ENCODE measurements at regions of chr10 and their contacts with region 1.

Region 1: GRCh38 chr10:101012525-101013364 is 13.1 kb downstream of the LZTS2 start:
- DNase-seq: peak; percentile 60 to 86 (median 70)
- ATAC-seq: peak; percentile 88
- H3K4me3 ChIP-seq: no peak overlapping the region
- H3K4me3 Mint-ChIP-seq: no peak overlapping the region
- H3K27ac ChIP-seq: no peak overlapping the region
- H3K27ac Mint-ChIP-seq: no peak overlapping the region
- H3K4me1 ChIP-seq: peaks cover 19% of the 10 kb centered on the region
- H3K4me1 Mint-ChIP-seq: peaks cover 16% of the 10 kb centered on the region
- H3K27me3 ChIP-seq: peaks cover 20 to 21% of the 10 kb centered on the region in 2 experiments
- H3K27me3 Mint-ChIP-seq: peaks cover 40% of the 10 kb centered on the region
- CTCF ChIP-seq: peak; percentile 87

Region 2: GRCh38 chr10:100670828-100671479 is 341.8 kb before region 1 on chr10:
- CTCF ChIA-PET with region 1: no interaction called
- POLR2A ChIA-PET with region 1: no interaction called
- intact Hi-C with region 1: loop called in 1 of 2 experiments (anchors 5 kb)
- DNase-seq: peak; percentile 15 to 72 (median 49)
- ATAC-seq: peak; percentile 66
- H3K4me3 ChIP-seq: no peak overlapping the region
- H3K4me3 Mint-ChIP-seq: no peak overlapping the region
- H3K27ac ChIP-seq: no peak overlapping the region
- H3K27ac Mint-ChIP-seq: no peak overlapping the region
- H3K4me1 ChIP-seq: peaks cover 6% of the 10 kb centered on the region
- H3K4me1 Mint-ChIP-seq: peaks cover 9% of the 10 kb centered on the region
- H3K27me3 ChIP-seq: peaks cover 58 to 75% of the 10 kb centered on the region in 2 experiments
- H3K27me3 Mint-ChIP-seq: peaks cover 84% of the 10 kb centered on the region
- CTCF ChIP-seq: peak; percentile 68

Region 3: GRCh38 chr10:100969187-100970075 is 43.3 kb before region 1 on chr10 and contains the start of gene SEMA4G:
- CTCF ChIA-PET with region 1: no interaction called
- POLR2A ChIA-PET with region 1: no interaction called
- intact Hi-C with region 1: loop called (anchors 1 to 2 kb)
- DNase-seq: peak; percentile 14 to 73 (median 36)
- ATAC-seq: peak; percentile 77
- H3K4me3 ChIP-seq: peak within 1 kb of the TSS; percentile 46
- H3K4me3 Mint-ChIP-seq: peak within 1 kb of the TSS; percentile 76
- H3K27ac ChIP-seq: no peak within 1 kb of the TSS
- H3K27ac Mint-ChIP-seq: no peak within 1 kb of the TSS
- H3K4me1 ChIP-seq: peaks cover 20% of the 10 kb centered on the region
- H3K4me1 Mint-ChIP-seq: peaks cover 21% of the 10 kb centered on the region
- H3K27me3 ChIP-seq: no peaks in the 10 kb centered on the region
- H3K27me3 Mint-ChIP-seq: no peaks in the 10 kb centered on the region
- CTCF ChIP-seq: peak; percentile 67
- total RNA-seq, gene SEMA4G: 1.1 to 1.6 TPM

Region 4: GRCh38 chr10:100993986-100994708 is 18.6 kb before region 1 on chr10:
- CTCF ChIA-PET with region 1: interaction called, 20 read pairs
- POLR2A ChIA-PET with region 1: no interaction called
- intact Hi-C with region 1: loop called (anchors 1 kb)
- DNase-seq: no peak
- ATAC-seq: no peak
- H3K4me3 ChIP-seq: no peak overlapping the region
- H3K4me3 Mint-ChIP-seq: peak overlapping the region; percentile 82
- H3K27ac ChIP-seq: no peak overlapping the region
- H3K27ac Mint-ChIP-seq: peak overlapping the region; percentile 13
- H3K4me1 ChIP-seq: peaks cover 37% of the 10 kb centered on the region
- H3K4me1 Mint-ChIP-seq: peaks cover 27% of the 10 kb centered on the region
- H3K27me3 ChIP-seq: no peaks in the 10 kb centered on the region
- H3K27me3 Mint-ChIP-seq: no peaks in the 10 kb centered on the region
- CTCF ChIP-seq: peak; percentile 50

Region 5: GRCh38 chr10:100998991-100999741 is 13.6 kb before region 1 on chr10:
- CTCF ChIA-PET with region 1: interaction called, 20 read pairs
- POLR2A ChIA-PET with region 1: interaction called, 3 read pairs
- intact Hi-C with region 1: loop called (anchors 1 kb)
- DNase-seq: peak; percentile 61 to 90 (median 74)
- ATAC-seq: peak; percentile 66
- H3K4me3 ChIP-seq: peak overlapping the region; percentile 97
- H3K4me3 Mint-ChIP-seq: peak overlapping the region; percentile 90
- H3K27ac ChIP-seq: peak overlapping the region; percentile 82 to 90
- H3K27ac Mint-ChIP-seq: peak overlapping the region; percentile 76
- H3K4me1 ChIP-seq: peaks cover 41% of the 10 kb centered on the region
- H3K4me1 Mint-ChIP-seq: peaks cover 25% of the 10 kb centered on the region
- H3K27me3 ChIP-seq: no peaks in the 10 kb centered on the region
- H3K27me3 Mint-ChIP-seq: no peaks in the 10 kb centered on the region
- CTCF ChIP-seq: peak; percentile 96

Region 6: DNA sequence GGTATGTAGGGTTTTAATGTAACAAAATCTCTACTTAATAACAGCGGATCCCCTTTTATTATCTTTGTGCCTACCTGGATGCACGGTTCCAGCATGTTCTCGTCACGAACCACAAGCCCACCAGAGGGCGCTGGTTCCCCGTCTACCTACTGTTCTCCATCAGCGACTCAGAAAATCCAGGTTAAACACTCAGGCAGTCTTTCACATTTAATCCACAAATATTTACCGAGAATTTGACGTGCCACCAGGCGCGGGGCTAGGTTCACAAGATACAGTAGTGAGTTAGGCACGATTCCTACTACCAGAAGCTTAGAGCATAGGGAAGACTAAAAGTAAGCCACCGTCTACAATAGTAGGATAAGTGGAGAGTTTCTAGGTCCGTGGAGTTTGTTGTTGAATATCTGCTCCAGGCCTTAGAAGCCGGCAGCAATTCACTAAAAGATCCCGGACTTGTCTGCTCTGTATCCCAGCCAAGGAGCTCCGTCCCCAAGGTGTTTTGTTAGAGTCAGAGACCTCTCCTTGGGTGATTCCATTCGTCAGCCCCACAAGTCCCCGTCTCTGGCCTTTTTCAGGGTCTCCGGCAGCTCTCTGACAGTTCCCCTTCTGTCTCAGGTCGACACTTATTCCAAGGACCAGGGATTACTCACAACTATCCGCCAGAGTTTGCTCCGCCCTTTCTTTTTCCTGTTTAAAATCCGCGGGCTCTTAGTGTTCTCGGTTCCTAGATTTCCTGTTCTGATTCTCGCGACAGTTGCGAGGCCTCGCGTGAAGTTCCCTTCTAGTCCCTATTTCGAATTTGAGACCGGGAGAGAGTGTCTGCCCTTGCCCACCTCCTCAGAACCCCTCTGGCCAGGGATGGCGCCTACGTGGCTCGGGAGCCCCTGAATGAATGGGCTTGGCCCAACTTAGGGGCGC is 47.5 kb after region 1 on chr10:
- CTCF ChIA-PET with region 1: interaction called, 11 read pairs
- POLR2A ChIA-PET with region 1: no interaction called
- intact Hi-C with region 1: loop called in 1 of 2 experiments (anchors 10 kb)
- DNase-seq: peak; percentile 79 to 95 (median 90)
- ATAC-seq: peak; percentile 70
- H3K4me3 ChIP-seq: peak overlapping the region; percentile 85
- H3K4me3 Mint-ChIP-seq: peak overlapping the region; percentile 95
- H3K27ac ChIP-seq: peak overlapping the region; percentile 88 to 91
- H3K27ac Mint-ChIP-seq: peak overlapping the region; percentile 81
- H3K4me1 ChIP-seq: peaks cover 40% of the 10 kb centered on the region
- H3K4me1 Mint-ChIP-seq: peaks cover 31% of the 10 kb centered on the region
- H3K27me3 ChIP-seq: peaks cover 27% of the 10 kb centered on the region in 2 experiments
- H3K27me3 Mint-ChIP-seq: peaks cover 20% of the 10 kb centered on the region
- CTCF ChIP-seq: peak; percentile 98

Measured in CD4-positive, alpha-beta T cell (primary cell).